Activated T-helper 1 cell treated with anti-CD3 and anti-CD28 coated beads, Interleukin-12 subunit alpha, Interleukin-12 subunit beta, Interleukin-2, Interleukin-4 antibody, amounts not matched to agents 30 ng/mL and 10 ng/mL and 1 ng/mL, durations not matched to agents 14 hours and 24 hours and 36 hours (primary cell): ENCODE measurements at regions of chr4 and their contacts with region 1.

Region 1: DNA sequence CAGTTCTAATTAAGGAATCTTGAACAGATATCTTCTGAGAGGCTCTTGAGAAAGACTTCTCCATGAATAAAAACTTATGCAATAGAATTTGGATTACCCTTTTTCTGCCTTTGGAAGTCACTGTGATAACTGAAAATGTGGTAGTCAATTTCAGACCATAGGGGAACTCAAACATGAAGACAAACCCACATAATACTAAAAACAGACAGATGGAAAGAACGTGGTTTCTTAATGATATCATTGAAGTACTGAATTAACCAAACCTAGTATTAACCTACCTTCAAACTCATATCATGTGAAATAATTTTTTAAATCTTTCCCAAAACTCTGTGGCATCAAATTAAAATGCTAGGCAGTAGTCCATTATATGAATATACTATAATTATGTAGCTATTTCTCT is 153.5 kb downstream of the CAMK2D start:
- DNase-seq: no peak
- H3K4me3 Mint-ChIP-seq: no peak overlapping the region
- H3K27ac Mint-ChIP-seq: peak overlapping the region; percentile 36
- H3K4me1 Mint-ChIP-seq: peaks cover 34% of the 10 kb centered on the region
- H3K27me3 Mint-ChIP-seq: no peaks in the 10 kb centered on the region

Region 2: DNA sequence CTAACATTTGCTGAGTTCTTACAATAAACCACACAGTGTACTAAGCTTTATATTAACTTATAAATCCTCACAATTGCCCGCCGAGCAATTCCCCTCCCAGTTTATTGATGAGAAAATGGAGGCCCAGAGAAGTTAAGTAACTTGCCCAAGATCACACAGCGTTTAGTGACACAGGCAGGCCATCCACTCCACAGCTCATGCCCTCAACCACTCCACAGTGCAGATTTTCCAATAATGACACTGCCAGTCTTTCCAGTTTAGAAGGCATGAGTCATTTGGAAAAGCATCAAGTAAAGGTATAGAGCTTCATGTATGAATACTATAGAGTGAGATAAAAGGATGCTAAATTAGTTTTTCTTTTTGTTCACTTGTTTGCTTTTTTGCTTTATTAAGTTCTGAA is 54.9 kb before region 1 on chr4:
- intact Hi-C with region 1: no loop called
- DNase-seq: no peak
- H3K4me3 Mint-ChIP-seq: no peak overlapping the region
- H3K27ac Mint-ChIP-seq: no peak overlapping the region
- H3K4me1 Mint-ChIP-seq: peaks cover 5% of the 10 kb centered on the region
- H3K27me3 Mint-ChIP-seq: no peaks in the 10 kb centered on the region

Region 3: GRCh38 chr4:113564493-113564892 is 43.5 kb before region 1 on chr4:
- intact Hi-C with region 1: loop called (anchors 5 kb)
- DNase-seq: no peak
- H3K4me3 Mint-ChIP-seq: peak overlapping the region; percentile 25
- H3K27ac Mint-ChIP-seq: no peak overlapping the region
- H3K4me1 Mint-ChIP-seq: peaks cover 44% of the 10 kb centered on the region
- H3K27me3 Mint-ChIP-seq: no peaks in the 10 kb centered on the region

Region 4: DNA sequence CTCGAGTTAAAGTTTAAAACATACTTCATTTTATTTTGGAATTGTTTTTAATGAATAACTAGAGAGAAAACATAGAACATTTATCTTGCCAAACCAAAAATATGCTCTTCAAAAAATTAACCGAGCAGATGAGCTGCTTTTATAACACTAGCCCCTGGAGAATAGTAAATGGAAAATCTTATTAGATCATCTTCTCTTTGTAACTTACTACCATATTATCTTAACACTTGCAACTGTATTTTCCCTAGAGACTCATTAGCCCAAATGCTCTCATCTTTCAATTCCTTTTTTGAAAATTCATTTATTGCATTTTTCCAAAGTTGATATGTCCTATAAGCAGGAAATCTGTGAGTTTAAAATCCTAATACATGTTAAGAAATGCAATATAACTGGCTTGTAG is 10.2 kb after region 1 on chr4:
- intact Hi-C with region 1: loop called (anchors 1 kb)
- DNase-seq: no peak
- H3K4me3 Mint-ChIP-seq: no peak overlapping the region
- H3K27ac Mint-ChIP-seq: no peak overlapping the region
- H3K4me1 Mint-ChIP-seq: peaks cover 6% of the 10 kb centered on the region
- H3K27me3 Mint-ChIP-seq: no peaks in the 10 kb centered on the region

Region 5: DNA sequence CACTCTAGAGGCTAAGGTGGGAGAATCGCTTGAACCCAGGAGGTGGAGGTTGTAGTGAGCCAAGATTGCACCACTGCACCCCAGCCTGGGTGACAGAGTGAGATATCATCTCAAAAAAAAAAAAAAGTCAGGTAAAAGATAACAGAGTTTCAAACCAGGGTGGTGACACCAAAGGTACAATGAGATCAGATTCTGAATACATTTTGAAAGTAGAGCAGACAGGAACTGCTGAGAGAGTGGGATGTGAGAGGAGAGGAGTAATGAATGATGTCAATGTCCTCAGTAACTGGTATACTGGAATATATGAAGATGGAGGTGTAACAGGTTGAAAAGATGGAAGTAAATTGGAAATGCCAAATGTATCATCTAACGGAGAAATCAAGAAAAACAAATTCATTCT is 17.9 kb after region 1 on chr4:
- intact Hi-C with region 1: loop called (anchors 2 kb)
- DNase-seq: no peak
- H3K4me3 Mint-ChIP-seq: no peak overlapping the region
- H3K27ac Mint-ChIP-seq: peak overlapping the region; percentile 25
- H3K4me1 Mint-ChIP-seq: peaks cover 40% of the 10 kb centered on the region
- H3K27me3 Mint-ChIP-seq: no peaks in the 10 kb centered on the region